K562 (cell line): ENCODE measurements at regions of chr10 and their contacts with region 1.

Region 1: GRCh38 chr10:104121520-104122224 is at the start of gene SFR1:
- DNase-seq: peak; percentile 91 to 96 (median 92)
- ATAC-seq: peak; percentile 95
- H3K4me3 ChIP-seq: peak within 1 kb of the TSS; percentile 64
- H3K27ac ChIP-seq: peak within 1 kb of the TSS; percentile 97
- H3K4me1 ChIP-seq: peaks cover 0 to 7% of the 10 kb centered on the region in 2 experiments; a peak in 1 of 5 replicates
- H3K27me3 ChIP-seq: no peaks in the 10 kb centered on the region
- CTCF ChIP-seq: peak; percentile 45 to 65 (median 64)
- EP300 ChIP-seq: peak; percentile 69
- POLR2A ChIP-seq: peak; percentile 85
- RAD21 ChIP-seq: peak in 1 of 2 experiments; percentile 35; a peak in 3 of 4 replicates
- polyA plus RNA-seq, gene SFR1: 17.8 to 18.7 TPM

Region 2: GRCh38 chr10:103888113-103888841 is 233.4 kb before region 1 on chr10:
- CTCF ChIA-PET with region 1: interaction called, 4 read pairs
- POLR2A ChIA-PET with region 1: no interaction called
- in situ Hi-C with region 1: no loop called
- intact Hi-C with region 1: loop called (anchors 2 kb)
- DNase-seq: peak; percentile 33 to 46 (median 38)
- ATAC-seq: peak; percentile 80
- H3K4me3 ChIP-seq: no peak overlapping the region
- H3K27ac ChIP-seq: no peak overlapping the region
- H3K4me1 ChIP-seq: no peaks in the 10 kb centered on the region
- H3K27me3 ChIP-seq: no peaks in the 10 kb centered on the region
- CTCF ChIP-seq: peak; percentile 37 to 81 (median 73); a peak in 5 of 6 replicates
- EP300 ChIP-seq: no peak
- POLR2A ChIP-seq: no peak
- RAD21 ChIP-seq: peak; percentile 76 to 88

Region 3: GRCh38 chr10:103966671-103967447 is 154.8 kb before region 1 on chr10 and contains the start of gene SLK:
- CTCF ChIA-PET with region 1: no interaction called
- POLR2A ChIA-PET with region 1: no interaction called
- in situ Hi-C with region 1: no loop called
- intact Hi-C with region 1: loop called (anchors 5 kb)
- DNase-seq: peak; percentile 76 to 88 (median 83)
- ATAC-seq: peak; percentile 59
- H3K4me3 ChIP-seq: peak within 1 kb of the TSS; percentile 90
- H3K27ac ChIP-seq: peak within 1 kb of the TSS; percentile 98
- H3K4me1 ChIP-seq: peaks cover 1 to 5% of the 10 kb centered on the region in 2 experiments; a peak in 2 of 5 replicates
- H3K27me3 ChIP-seq: no peaks in the 10 kb centered on the region
- CTCF ChIP-seq: no peak
- EP300 ChIP-seq: no peak
- POLR2A ChIP-seq: peak; percentile 81
- RAD21 ChIP-seq: no peak
- polyA plus RNA-seq, gene SLK: 8.2 to 9.2 TPM

Region 4: GRCh38 chr10:104059364-104059763 is 62.3 kb before region 1 on chr10:
- CTCF ChIA-PET with region 1: no interaction called
- POLR2A ChIA-PET with region 1: no interaction called
- in situ Hi-C with region 1: no loop called
- intact Hi-C with region 1: no loop called
- DNase-seq: no peak
- ATAC-seq: no peak
- H3K4me3 ChIP-seq: no peak overlapping the region
- H3K27ac ChIP-seq: no peak overlapping the region
- H3K4me1 ChIP-seq: no peaks in the 10 kb centered on the region
- H3K27me3 ChIP-seq: peaks cover 1 to 50% of the 10 kb centered on the region in 2 experiments; a peak in 3 of 5 replicates
- CTCF ChIP-seq: no peak
- EP300 ChIP-seq: no peak
- POLR2A ChIP-seq: no peak
- RAD21 ChIP-seq: no peak

Region 5: GRCh38 chr10:104085801-104086400 is 35.8 kb before region 1 on chr10 and contains the start of gene COL17A1:
- CTCF ChIA-PET with region 1: no interaction called
- POLR2A ChIA-PET with region 1: no interaction called
- in situ Hi-C with region 1: no loop called
- intact Hi-C with region 1: no loop called
- DNase-seq: no peak
- ATAC-seq: no peak
- H3K4me3 ChIP-seq: no peak within 1 kb of the TSS
- H3K27ac ChIP-seq: no peak within 1 kb of the TSS
- H3K4me1 ChIP-seq: no peaks in the 10 kb centered on the region
- H3K27me3 ChIP-seq: peaks cover 3 to 7% of the 10 kb centered on the region in 2 experiments; a peak in 4 of 5 replicates
- CTCF ChIP-seq: no peak
- EP300 ChIP-seq: no peak
- POLR2A ChIP-seq: no peak
- RAD21 ChIP-seq: no peak
- polyA plus RNA-seq, gene COL17A1: not detected

Region 6: DNA sequence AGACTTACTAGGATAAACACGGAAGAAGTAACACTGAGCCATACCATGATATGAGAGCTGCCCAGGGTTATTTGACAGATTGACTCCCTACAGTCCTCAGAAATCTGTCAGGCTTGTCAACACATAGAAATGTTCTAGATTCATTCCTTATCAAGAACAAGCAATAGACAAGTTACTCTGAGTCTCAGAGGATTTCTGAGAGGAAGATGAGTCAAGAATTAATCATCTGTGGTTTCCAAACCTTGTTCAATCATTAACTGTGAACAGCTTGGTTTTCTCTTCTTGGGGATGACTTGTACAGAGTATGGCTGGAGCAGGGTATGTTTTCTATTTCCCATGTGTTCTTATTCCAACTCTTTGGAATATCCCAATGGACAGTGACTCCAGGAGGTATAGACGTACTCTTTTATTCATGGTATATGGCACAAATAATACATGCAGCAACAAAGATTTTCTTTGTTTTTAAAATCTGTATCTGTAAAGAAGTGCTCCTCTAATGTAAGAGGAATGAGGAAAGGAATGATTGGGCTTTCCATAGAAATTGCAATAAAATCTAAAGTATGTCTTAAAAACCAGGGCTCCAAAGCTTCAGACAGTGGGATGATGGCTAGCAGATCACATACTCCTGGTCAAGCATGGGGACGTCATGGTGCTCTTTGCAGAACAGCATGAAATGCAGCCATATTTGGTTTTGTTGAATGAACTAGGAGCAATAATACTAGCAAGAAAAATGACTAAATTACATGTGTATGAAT is 11.6 kb before region 1 on chr10:
- CTCF ChIA-PET with region 1: no interaction called
- POLR2A ChIA-PET with region 1: interaction called, 10 read pairs
- in situ Hi-C with region 1: no loop called
- intact Hi-C with region 1: no loop called
- DNase-seq: peak in 1 of 4 experiments; percentile 16
- ATAC-seq: no peak
- H3K4me3 ChIP-seq: no peak overlapping the region
- H3K27ac ChIP-seq: no peak overlapping the region
- H3K4me1 ChIP-seq: no peaks in the 10 kb centered on the region
- H3K27me3 ChIP-seq: no peaks in the 10 kb centered on the region; a peak in 1 of 5 replicates
- CTCF ChIP-seq: no peak
- EP300 ChIP-seq: no peak
- POLR2A ChIP-seq: no peak
- RAD21 ChIP-seq: no peak

Region 7: DNA sequence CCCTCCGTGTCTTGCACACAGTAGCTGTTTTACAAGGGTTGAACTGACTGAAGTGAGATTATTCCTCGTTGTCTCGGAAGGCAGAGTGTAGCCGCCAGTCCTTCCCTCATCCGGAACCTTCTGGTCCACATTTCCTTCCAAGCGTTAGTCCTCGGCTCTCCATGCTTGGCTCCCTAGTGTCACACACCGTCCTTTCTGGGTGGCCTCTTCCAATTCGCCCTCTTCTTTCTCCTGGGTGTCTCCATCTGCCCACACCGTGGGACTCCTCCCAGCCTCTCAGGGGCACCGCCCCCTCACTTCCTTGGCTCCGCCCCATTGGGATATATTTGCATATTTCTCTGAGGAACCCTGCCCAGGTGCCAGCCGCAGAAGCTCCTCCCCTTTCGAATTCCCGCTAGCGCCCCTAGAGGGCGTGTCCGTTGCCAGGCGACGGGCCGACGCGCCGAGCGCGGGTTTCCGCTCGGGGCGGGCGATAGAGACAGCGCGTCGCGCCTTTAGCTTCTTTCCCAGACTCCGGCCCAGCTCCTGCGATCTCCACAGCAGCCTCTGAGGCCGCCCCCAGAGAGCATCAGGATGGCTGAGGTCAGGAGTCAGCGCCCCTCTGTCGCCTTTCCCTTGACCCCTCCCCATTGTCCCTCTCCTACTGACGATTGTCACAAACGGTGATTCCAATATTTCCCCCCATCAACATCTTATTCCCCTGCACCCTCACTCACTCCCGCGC is 231.8 kb after region 1 on chr10 and contains the start of gene CFAP58:
- CTCF ChIA-PET with region 1: no interaction called
- POLR2A ChIA-PET with region 1: no interaction called
- in situ Hi-C with region 1: no loop called
- intact Hi-C with region 1: loop called (anchors 5 kb)
- DNase-seq: peak; percentile 91 to 94 (median 92)
- ATAC-seq: peak; percentile 98
- H3K4me3 ChIP-seq: peak within 1 kb of the TSS; percentile 56
- H3K27ac ChIP-seq: peak within 1 kb of the TSS; percentile 53; the same call in 1 of the 3 replicates
- H3K4me1 ChIP-seq: peaks cover 5 to 24% of the 10 kb centered on the region in 2 experiments
- H3K27me3 ChIP-seq: no peaks in the 10 kb centered on the region
- CTCF ChIP-seq: peak; percentile 57 to 79 (median 76); a peak in 5 of 6 replicates
- EP300 ChIP-seq: no peak
- POLR2A ChIP-seq: peak; percentile 51; the same call in 1 of the 2 replicates
- RAD21 ChIP-seq: peak in 1 of 2 experiments; percentile 16; a peak in 1 of 4 replicates
- polyA plus RNA-seq, gene CFAP58: 0.08 to 0.52 TPM